ENCODE measurements at regions of chr17 and their contacts with region 1.

Region 1: DNA sequence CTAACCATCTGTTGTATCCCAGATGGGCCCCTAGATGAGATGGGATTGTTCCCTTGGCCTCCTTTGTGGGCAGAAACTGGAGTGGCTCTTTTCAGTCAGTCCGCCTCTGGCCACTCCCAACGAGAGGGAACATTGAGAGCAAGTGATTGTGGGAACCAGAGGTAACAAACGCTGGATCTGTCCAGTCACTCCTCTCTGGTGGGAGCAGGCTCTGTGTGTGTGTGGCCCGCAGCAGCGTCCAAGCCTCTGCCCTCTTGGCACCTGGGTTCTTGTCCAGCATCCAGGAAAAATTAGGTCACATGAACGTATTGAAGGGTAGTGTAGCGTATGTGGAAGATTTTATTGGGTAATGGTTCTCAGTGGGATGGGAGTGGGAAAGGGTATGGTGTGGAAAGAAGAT is 101.9 kb upstream of the COX10 start:
- DNase-seq: no peak
- H3K4me3 ChIP-seq: no peak overlapping the region
- H3K27ac ChIP-seq: no peak overlapping the region
- H3K4me1 ChIP-seq: peaks cover 0 to 3% of the 10 kb centered on the region in 2 donors
- H3K27me3 ChIP-seq: no peaks in the 10 kb centered on the region
- CTCF ChIP-seq: no peak

Region 2: DNA sequence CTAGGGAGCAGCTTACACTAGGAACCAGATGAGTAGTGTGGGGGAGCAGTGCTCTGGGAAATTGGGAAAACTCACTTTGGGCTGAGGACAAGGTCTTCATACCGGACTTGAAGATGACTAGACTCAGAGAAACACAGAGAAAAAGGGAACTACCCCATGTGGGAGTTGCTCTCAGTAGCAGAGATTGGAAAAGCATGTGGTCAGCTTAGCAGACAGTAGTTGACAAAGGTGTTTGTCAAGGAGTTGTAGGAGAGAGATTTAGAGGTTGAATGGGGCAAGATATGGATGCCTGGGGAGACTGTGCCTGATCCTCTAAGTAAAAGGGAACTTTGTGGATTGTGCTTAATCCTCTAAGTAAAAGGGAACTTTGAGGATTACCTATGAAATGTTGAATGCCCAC is 92.6 kb before region 1 on chr17:
- intact Hi-C with region 1: no loop called
- DNase-seq: no peak
- H3K4me3 ChIP-seq: no peak overlapping the region
- H3K27ac ChIP-seq: no peak overlapping the region
- H3K4me1 ChIP-seq: no peaks in the 10 kb centered on the region
- H3K27me3 ChIP-seq: no peaks in the 10 kb centered on the region
- CTCF ChIP-seq: no peak

Region 3: DNA sequence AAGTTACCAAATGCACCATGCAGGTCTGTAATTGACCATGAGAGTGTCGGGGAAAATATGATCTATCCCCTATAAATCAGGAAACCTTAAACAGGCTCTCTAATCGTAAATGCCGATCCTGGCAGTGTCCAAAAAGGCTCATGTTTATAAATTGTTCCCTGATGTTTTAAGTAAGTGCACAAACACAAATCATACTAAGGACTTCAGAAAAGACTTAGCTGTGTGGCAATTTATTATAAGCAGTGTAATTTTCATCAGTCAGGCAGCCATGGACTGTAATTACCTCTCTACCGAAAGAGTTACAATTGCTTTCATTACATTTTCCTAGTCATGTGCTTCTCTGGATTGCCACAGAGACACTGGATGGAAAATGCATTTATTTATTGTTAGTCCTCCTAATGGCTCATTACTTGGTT is 28.4 kb after region 1 on chr17:
- intact Hi-C with region 1: no loop called
- DNase-seq: no peak
- H3K4me3 ChIP-seq: no peak overlapping the region
- H3K27ac ChIP-seq: no peak overlapping the region
- H3K4me1 ChIP-seq: no peaks in the 10 kb centered on the region
- H3K27me3 ChIP-seq: no peaks in the 10 kb centered on the region
- CTCF ChIP-seq: no peak

Region 4: GRCh38 chr17:14019186-14019956 is 52.0 kb after region 1 on chr17:
- intact Hi-C with region 1: loop called (anchors 5 kb)
- DNase-seq: no peak
- H3K4me3 ChIP-seq: no peak overlapping the region
- H3K27ac ChIP-seq: no peak overlapping the region
- H3K4me1 ChIP-seq: peaks cover 0 to 5% of the 10 kb centered on the region in 2 donors
- H3K27me3 ChIP-seq: no peaks in the 10 kb centered on the region
- CTCF ChIP-seq: no peak

Region 5: GRCh38 chr17:14118951-14119350 is 151.5 kb after region 1 on chr17:
- intact Hi-C with region 1: no loop called
- DNase-seq: no peak
- H3K4me3 ChIP-seq: no peak overlapping the region
- H3K27ac ChIP-seq: no peak overlapping the region
- H3K4me1 ChIP-seq: no peaks in the 10 kb centered on the region
- H3K27me3 ChIP-seq: no peaks in the 10 kb centered on the region
- CTCF ChIP-seq: no peak

Measured in ascending aorta (tissue), 2 donors.